K562 (cell line): ENCODE measurements at regions of chr1 and their contacts with region 1.

Region 1: GRCh38 chr1:26799479-26800142 is 11.9 kb downstream of the PIGV start:
- DNase-seq: peak in 2 of 4 experiments; percentile 51 to 55
- ATAC-seq: peak; percentile 83
- H3K4me3 ChIP-seq: no peak overlapping the region
- H3K27ac ChIP-seq: peak overlapping the region; percentile 11; the same call in 1 of the 3 replicates
- H3K4me1 ChIP-seq: peaks cover 8 to 41% of the 10 kb centered on the region in 2 experiments; a peak in 4 of 5 replicates
- H3K27me3 ChIP-seq: no peaks in the 10 kb centered on the region
- CTCF ChIP-seq: peak in 1 of 3 experiments; percentile 17; a peak in 1 of 6 replicates
- EP300 ChIP-seq: no peak
- POLR2A ChIP-seq: no peak
- RAD21 ChIP-seq: peak in 1 of 2 experiments; percentile 43; a peak in 1 of 4 replicates

Region 2: GRCh38 chr1:26700711-26701110 is 98.9 kb before region 1 on chr1:
- CTCF ChIA-PET with region 1: no interaction called
- POLR2A ChIA-PET with region 1: interaction called, 11 read pairs
- in situ Hi-C with region 1: no loop called
- intact Hi-C with region 1: no loop called
- DNase-seq: no peak
- ATAC-seq: no peak
- H3K4me3 ChIP-seq: peak overlapping the region; percentile 79; the same call in 1 of the 2 replicates
- H3K27ac ChIP-seq: peak overlapping the region; percentile 37; the same call in 2 of the 3 replicates
- H3K4me1 ChIP-seq: peaks cover 32 to 62% of the 10 kb centered on the region in 2 experiments
- H3K27me3 ChIP-seq: no peaks in the 10 kb centered on the region
- CTCF ChIP-seq: no peak
- EP300 ChIP-seq: no peak
- POLR2A ChIP-seq: no peak
- RAD21 ChIP-seq: no peak